ENCODE measurements at regions of chr18 and their contacts with region 1.

Region 1: DNA sequence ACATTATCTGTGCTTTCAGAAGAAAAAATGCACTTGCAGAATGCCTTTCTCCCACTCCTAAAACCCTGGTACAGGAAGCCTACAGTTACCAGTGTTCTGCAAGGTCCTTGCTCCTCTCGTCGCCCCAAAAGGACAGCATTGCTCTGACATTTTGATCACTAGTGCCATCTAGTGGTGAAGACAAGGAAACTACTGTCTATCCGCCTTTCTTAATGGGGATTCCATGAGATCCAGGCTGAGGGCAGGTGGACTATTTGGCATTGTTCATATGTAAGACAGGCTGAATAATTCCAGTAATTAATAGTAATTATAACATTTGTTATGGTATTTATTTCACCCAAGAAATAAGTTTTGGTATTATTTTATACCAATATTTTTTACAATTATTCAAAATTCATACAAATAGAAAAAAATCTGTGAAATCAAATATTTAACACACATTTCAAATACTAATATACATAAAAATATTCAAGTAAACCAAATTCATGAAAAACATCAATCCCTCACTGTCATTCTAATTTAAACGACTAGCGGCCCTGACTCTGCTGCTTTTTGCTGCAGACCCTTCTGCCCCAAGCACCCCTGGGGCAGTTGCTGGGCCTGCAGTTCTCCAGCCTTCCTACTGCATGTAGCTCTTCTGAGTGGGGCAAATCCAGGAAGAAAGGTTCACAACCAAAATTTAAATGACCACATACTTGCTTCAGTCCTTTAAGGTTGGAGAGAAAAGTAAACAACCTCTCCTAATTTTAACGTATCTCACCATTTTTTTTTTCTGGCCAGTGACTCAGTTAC is 19.0 kb downstream of the TPGS2 start:
- DNase-seq: peak; percentile 50
- ATAC-seq: peak; percentile 91
- H3K4me3 Mint-ChIP-seq: no peak overlapping the region
- H3K27ac Mint-ChIP-seq: no peak overlapping the region
- H3K4me1 Mint-ChIP-seq: peaks cover 3% of the 10 kb centered on the region
- H3K27me3 Mint-ChIP-seq: no peaks in the 10 kb centered on the region

Region 2: DNA sequence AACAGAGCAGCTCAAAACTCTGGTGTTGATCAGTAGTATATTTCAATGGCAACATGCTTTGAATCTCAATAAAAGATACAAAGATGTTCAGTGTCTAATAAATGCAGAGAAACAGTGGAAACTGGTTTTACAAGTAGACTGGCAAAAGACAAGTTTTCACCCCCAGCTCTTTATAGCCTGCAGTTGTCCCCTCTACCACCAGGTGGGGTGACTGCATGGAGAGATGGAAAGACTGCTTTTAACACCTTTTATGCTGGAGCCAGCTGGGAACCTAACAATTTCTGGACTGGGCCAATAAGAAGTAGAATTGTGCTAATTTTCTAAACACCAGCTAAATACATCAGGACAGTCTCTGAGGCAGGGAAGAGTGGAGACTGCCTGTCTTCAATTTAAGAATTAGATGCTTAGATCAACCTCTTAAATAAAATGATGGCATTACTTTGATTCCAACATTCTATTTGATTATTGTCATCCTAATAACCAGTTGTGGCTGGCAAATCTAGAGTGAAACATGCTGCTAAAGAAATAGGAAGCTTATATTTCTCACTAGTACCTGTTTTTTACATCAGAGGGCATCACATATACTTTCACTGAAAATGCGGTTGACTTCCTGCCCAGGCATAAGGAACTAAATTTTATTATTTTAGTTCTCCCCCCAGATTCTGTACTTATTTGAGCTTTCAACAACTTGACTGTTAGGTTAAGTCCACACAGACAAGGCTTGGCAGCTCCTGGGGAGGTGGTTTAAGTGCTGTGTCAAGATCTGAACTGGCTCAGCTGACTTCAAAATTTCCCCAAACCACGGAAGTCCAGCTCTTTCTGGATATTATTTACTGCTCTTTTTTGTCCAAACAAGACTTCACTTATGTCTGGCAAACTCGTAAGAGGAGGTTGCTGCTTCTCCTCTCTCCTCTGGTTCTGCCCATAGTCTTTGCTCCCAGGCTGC is 121.5 kb before region 1 on chr18:
- CTCF ChIA-PET with region 1: interaction called, 50 read pairs
- POLR2A ChIA-PET with region 1: no interaction called
- DNase-seq: peak; percentile 65
- ATAC-seq: no peak
- H3K4me3 Mint-ChIP-seq: no peak overlapping the region
- H3K27ac Mint-ChIP-seq: no peak overlapping the region
- H3K4me1 Mint-ChIP-seq: no peaks in the 10 kb centered on the region
- H3K27me3 Mint-ChIP-seq: peaks cover 10% of the 10 kb centered on the region

Measured in activated CD8-positive, alpha-beta T cell treated with anti-CD3 and anti-CD28 coated beads, Interleukin-2, amount 10 ng/mL, durations not matched to agents 7 days and 5 days (primary cell).